HepG2 (cell line): ENCODE measurements at regions of chr14 and their contacts with region 1.

Region 1: GRCh38 chr14:33369972-33370371 is 431.3 kb downstream of the NPAS3 start:
- DNase-seq: no peak
- ATAC-seq: no peak
- H3K4me3 ChIP-seq: no peak overlapping the region
- H3K27ac ChIP-seq: no peak overlapping the region
- H3K4me1 ChIP-seq: no peaks in the 10 kb centered on the region
- H3K27me3 ChIP-seq: no peaks in the 10 kb centered on the region
- CTCF ChIP-seq: no peak
- EP300 ChIP-seq: no peak
- POLR2A ChIP-seq: no peak
- RAD21 ChIP-seq: no peak

Region 2: DNA sequence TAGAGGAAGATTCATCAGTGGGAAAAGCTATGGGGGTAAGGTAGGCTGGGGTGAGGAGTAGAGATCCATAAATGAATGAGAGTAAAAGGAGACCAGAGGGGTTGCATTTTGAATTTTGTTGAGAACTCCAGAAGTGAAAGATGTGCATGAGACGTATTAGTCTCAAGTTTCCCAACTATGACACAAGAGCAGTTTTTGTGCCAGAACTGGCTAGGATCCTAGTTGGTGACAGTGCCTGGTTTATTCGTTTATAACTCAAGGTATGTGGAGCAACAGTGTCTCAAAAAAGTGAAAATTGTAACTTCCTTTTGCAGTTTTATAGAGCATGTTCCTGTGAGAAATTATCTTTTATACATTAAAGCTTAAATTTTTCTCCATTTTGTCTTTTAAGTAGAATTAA is 54.3 kb before region 1 on chr14:
- CTCF ChIA-PET with region 1: no interaction called
- POLR2A ChIA-PET with region 1: no interaction called
- in situ Hi-C with region 1: no loop called
- intact Hi-C with region 1: no loop called
- DNase-seq: no peak
- ATAC-seq: no peak
- H3K4me3 ChIP-seq: no peak overlapping the region
- H3K27ac ChIP-seq: no peak overlapping the region
- H3K4me1 ChIP-seq: no peaks in the 10 kb centered on the region
- H3K27me3 ChIP-seq: no peaks in the 10 kb centered on the region
- CTCF ChIP-seq: no peak
- EP300 ChIP-seq: no peak
- POLR2A ChIP-seq: no peak
- RAD21 ChIP-seq: no peak

Region 3: GRCh38 chr14:33332138-33332896 is 37.7 kb before region 1 on chr14:
- CTCF ChIA-PET with region 1: no interaction called
- POLR2A ChIA-PET with region 1: no interaction called
- in situ Hi-C with region 1: no loop called
- intact Hi-C with region 1: no loop called
- DNase-seq: no peak
- ATAC-seq: no peak
- H3K4me3 ChIP-seq: no peak overlapping the region
- H3K27ac ChIP-seq: no peak overlapping the region
- H3K4me1 ChIP-seq: no peaks in the 10 kb centered on the region
- H3K27me3 ChIP-seq: no peaks in the 10 kb centered on the region
- CTCF ChIP-seq: no peak
- EP300 ChIP-seq: no peak
- POLR2A ChIP-seq: no peak
- RAD21 ChIP-seq: no peak

Region 4: GRCh38 chr14:33589326-33589725 is 219.4 kb after region 1 on chr14:
- CTCF ChIA-PET with region 1: no interaction called
- POLR2A ChIA-PET with region 1: no interaction called
- in situ Hi-C with region 1: no loop called
- intact Hi-C with region 1: no loop called
- DNase-seq: no peak
- ATAC-seq: no peak; the same call in 2 of the 3 replicates
- H3K4me3 ChIP-seq: no peak overlapping the region
- H3K27ac ChIP-seq: no peak overlapping the region
- H3K4me1 ChIP-seq: no peaks in the 10 kb centered on the region
- H3K27me3 ChIP-seq: no peaks in the 10 kb centered on the region
- CTCF ChIP-seq: no peak
- EP300 ChIP-seq: no peak
- POLR2A ChIP-seq: no peak
- RAD21 ChIP-seq: no peak

Region 5: GRCh38 chr14:33914676-33915516 is 544.9 kb after region 1 on chr14:
- CTCF ChIA-PET with region 1: no interaction called
- POLR2A ChIA-PET with region 1: no interaction called
- in situ Hi-C with region 1: no loop called
- intact Hi-C with region 1: no loop called
- DNase-seq: no peak
- ATAC-seq: peak; percentile 41
- H3K4me3 ChIP-seq: no peak overlapping the region
- H3K27ac ChIP-seq: no peak overlapping the region
- H3K4me1 ChIP-seq: peaks cover 21% of the 10 kb centered on the region
- H3K27me3 ChIP-seq: no peaks in the 10 kb centered on the region
- CTCF ChIP-seq: no peak
- EP300 ChIP-seq: no peak
- POLR2A ChIP-seq: no peak
- RAD21 ChIP-seq: no peak

Region 6: GRCh38 chr14:34489353-34489752 is 1119.4 kb after region 1 on chr14:
- CTCF ChIA-PET with region 1: no interaction called
- POLR2A ChIA-PET with region 1: no interaction called
- in situ Hi-C with region 1: no loop called
- intact Hi-C with region 1: loop called (anchors 10 kb)
- DNase-seq: no peak
- ATAC-seq: no peak
- H3K4me3 ChIP-seq: no peak overlapping the region
- H3K27ac ChIP-seq: no peak overlapping the region
- H3K4me1 ChIP-seq: peaks cover 23% of the 10 kb centered on the region
- H3K27me3 ChIP-seq: no peaks in the 10 kb centered on the region
- CTCF ChIP-seq: no peak
- EP300 ChIP-seq: no peak
- POLR2A ChIP-seq: no peak
- RAD21 ChIP-seq: no peak